Panc1 (cell line): ENCODE measurements at regions of chr17 and their contacts with region 1.

Region 1: DNA sequence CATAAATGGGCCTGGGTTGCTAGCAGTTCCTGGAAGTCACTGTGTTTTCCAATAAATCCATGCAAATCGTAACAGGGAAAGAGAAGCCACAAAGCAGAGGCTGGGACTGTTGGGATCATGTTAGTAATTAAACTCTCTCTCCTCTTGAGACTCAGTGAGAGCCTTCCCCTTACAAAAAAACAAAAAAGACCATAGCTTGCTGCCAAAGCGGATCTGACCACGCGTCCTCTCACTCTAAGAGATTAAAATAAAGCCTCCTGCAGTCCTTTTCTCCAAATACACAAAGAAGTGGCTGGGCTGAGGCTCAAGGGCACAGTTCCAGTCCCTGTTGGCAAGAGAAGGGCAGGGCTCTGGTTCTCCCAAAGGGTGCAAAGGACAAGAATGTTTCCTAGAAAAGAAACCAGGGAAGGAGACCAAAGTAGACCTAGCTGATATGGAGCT is 38.5 kb downstream of the PIGL start:
- DNase-seq: no peak
- ATAC-seq: no peak
- H3K4me3 ChIP-seq: no peak overlapping the region
- H3K27ac ChIP-seq: no peak overlapping the region
- H3K4me1 ChIP-seq: peaks cover 3% of the 10 kb centered on the region; the same call in 1 of the 2 replicates
- H3K27me3 ChIP-seq: no peaks in the 10 kb centered on the region
- CTCF ChIP-seq: no peak

Region 2: GRCh38 chr17:16269658-16270057 is 14.2 kb after region 1 on chr17:
- CTCF ChIA-PET with region 1: interaction called, 10 read pairs
- POLR2A ChIA-PET with region 1: no interaction called
- in situ Hi-C with region 1: no loop called
- intact Hi-C with region 1: no loop called
- DNase-seq: no peak
- ATAC-seq: no peak
- H3K4me3 ChIP-seq: no peak overlapping the region
- H3K27ac ChIP-seq: no peak overlapping the region
- H3K4me1 ChIP-seq: peaks cover 6% of the 10 kb centered on the region; the same call in 1 of the 2 replicates
- H3K27me3 ChIP-seq: no peaks in the 10 kb centered on the region
- CTCF ChIP-seq: no peak

Region 3: DNA sequence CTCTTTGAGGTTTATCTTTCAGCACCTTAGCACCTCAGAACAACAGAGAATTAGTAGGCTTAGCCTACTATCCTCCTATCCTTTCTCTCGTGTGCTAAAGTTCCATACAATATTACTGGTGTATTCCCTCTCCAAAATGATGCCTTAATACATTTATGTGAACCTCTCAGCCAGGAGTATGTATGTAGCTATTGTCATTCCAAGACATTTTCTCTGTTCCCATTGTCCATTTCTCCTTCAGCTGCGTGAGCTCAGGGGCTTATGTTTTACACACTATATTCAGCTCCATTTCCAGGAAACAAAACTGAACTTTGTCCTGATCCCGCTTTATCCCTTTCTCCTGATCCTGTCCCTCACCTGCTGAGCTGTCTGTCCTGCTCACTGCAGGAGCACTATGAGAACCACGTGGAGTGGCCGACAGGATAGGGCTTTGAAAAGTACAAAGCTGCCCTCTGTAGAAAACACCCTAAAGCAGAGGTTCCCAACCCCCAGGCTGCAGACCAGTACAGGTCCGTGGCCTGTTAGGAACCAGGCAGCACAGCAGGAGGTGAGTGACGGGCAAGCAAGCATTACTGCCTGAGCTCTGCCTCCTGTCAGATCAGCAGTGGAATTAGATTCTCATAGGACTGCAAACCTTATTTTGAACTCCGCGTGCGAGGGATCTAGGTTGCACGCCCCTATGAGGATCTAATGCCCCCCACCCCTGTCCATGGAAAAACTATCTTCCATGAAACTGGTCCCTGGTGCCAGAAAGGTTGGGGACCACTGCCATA is 42.1 kb after region 1 on chr17:
- CTCF ChIA-PET with region 1: no interaction called
- POLR2A ChIA-PET with region 1: no interaction called
- in situ Hi-C with region 1: no loop called
- intact Hi-C with region 1: no loop called
- DNase-seq: no peak
- ATAC-seq: peak; percentile 44
- H3K4me3 ChIP-seq: no peak overlapping the region
- H3K27ac ChIP-seq: peak overlapping the region; percentile 34; the same call in 1 of the 2 replicates
- H3K4me1 ChIP-seq: peaks cover 14% of the 10 kb centered on the region
- H3K27me3 ChIP-seq: no peaks in the 10 kb centered on the region
- CTCF ChIP-seq: no peak